ENCODE measurements at regions of chr11 and their contacts with region 1.

Region 1: GRCh38 chr11:31022080-31022479 is 347.5 kb downstream of the DCDC1 start:
- DNase-seq: no peak
- ATAC-seq: no peak
- H3K4me3 ChIP-seq: no peak overlapping the region
- H3K27ac ChIP-seq: no peak overlapping the region
- H3K4me1 ChIP-seq: no peaks in the 10 kb centered on the region
- H3K27me3 ChIP-seq: no peaks in the 10 kb centered on the region
- CTCF ChIP-seq: no peak
- POLR2A ChIP-seq: no peak
- RAD21 ChIP-seq: no peak

Region 2: DNA sequence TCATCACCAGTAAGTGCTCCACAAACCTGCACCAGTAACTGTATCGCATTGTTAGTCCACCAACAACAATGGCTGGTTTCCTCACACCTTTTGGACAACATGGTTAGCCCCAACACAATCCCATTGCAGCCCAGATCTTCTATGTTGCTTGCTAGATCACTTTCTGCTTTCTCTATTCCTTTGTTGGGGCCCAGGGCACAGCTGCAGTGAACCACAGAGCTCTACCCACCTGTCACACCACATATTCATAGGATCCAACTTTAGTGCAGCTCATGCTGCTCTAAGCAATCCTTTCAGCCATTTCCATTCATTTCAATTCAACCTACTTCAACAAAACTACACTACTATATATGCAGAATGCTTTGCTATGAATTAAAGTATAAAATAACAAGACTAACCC is 16.9 kb before region 1 on chr11:
- CTCF ChIA-PET with region 1: no interaction called
- POLR2A ChIA-PET with region 1: no interaction called
- dilution Hi-C with region 1: no loop called
- in situ Hi-C with region 1: no loop called
- intact Hi-C with region 1: no loop called
- DNase-seq: no peak
- ATAC-seq: no peak
- H3K4me3 ChIP-seq: no peak overlapping the region
- H3K27ac ChIP-seq: no peak overlapping the region
- H3K4me1 ChIP-seq: no peaks in the 10 kb centered on the region
- H3K27me3 ChIP-seq: no peaks in the 10 kb centered on the region
- CTCF ChIP-seq: no peak
- POLR2A ChIP-seq: no peak
- RAD21 ChIP-seq: no peak

Region 3: GRCh38 chr11:31786996-31787685 is 765.1 kb after region 1 on chr11:
- CTCF ChIA-PET with region 1: no interaction called
- POLR2A ChIA-PET with region 1: no interaction called
- dilution Hi-C with region 1: no loop called
- in situ Hi-C with region 1: no loop called
- intact Hi-C with region 1: loop called (anchors 10 kb)
- DNase-seq: no peak
- ATAC-seq: no peak
- H3K4me3 ChIP-seq: no peak overlapping the region
- H3K27ac ChIP-seq: no peak overlapping the region
- H3K4me1 ChIP-seq: no peaks in the 10 kb centered on the region
- H3K27me3 ChIP-seq: peaks cover 2% of the 10 kb centered on the region; the same call in 1 of the 2 replicates
- CTCF ChIP-seq: no peak
- POLR2A ChIP-seq: no peak
- RAD21 ChIP-seq: no peak